Esophagus muscularis mucosa (tissue), 4 donors: ENCODE measurements at regions of chr3 and their contacts with region 1.

Region 1: DNA sequence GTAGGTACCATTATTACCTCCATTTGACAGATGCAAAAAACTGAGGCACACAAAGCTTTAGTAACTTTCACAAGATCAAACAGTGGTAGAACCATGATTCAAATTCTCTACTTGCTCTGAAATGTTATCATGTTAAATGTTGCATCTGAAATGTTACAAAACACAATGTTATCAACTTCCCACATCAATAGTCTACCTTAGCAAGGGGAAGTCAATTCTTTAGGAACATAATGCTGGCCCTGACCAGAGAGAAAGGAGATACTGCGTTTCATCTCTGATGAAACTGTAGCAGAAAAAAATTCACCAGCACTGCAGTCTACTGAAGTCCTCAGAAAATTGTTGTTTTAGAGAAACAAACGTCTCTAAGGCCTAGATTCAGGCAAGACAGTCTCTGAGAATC is 174.1 kb downstream of the SATB1 start:
- DNase-seq: no peak
- H3K4me3 ChIP-seq: no peak overlapping the region
- H3K27ac ChIP-seq: no peak overlapping the region
- H3K4me1 ChIP-seq: no peaks in the 10 kb centered on the region
- H3K27me3 ChIP-seq: no peaks in the 10 kb centered on the region
- CTCF ChIP-seq: no peak
- EP300 ChIP-seq: no peak
- POLR2A ChIP-seq: no peak

Region 2: DNA sequence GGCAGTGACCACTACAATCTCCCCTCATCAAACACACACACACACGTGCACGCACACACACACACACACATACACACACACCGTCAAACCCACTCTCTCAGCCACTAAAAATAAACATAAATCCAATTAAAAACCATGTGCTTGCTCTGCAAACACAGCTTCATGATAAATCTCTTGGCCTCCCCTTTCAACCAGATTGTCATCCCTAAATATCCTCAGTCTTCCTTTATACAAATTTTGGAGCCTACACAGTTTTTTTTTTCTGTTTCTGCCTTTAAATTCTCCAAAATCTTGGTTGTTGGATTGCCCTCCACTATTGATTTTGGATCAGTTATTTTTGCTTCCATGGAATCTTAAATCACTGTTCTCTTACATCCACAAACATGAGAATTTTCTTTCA is 71.5 kb before region 1 on chr3:
- intact Hi-C with region 1: loop called (anchors 2 kb)
- DNase-seq: no peak
- H3K4me3 ChIP-seq: no peak overlapping the region
- H3K27ac ChIP-seq: no peak overlapping the region
- H3K4me1 ChIP-seq: no peaks in the 10 kb centered on the region
- H3K27me3 ChIP-seq: no peaks in the 10 kb centered on the region
- CTCF ChIP-seq: no peak
- EP300 ChIP-seq: no peak
- POLR2A ChIP-seq: no peak